T-cell (primary cell): ENCODE measurements at regions of chr7 and their contacts with region 1.

Region 1: DNA sequence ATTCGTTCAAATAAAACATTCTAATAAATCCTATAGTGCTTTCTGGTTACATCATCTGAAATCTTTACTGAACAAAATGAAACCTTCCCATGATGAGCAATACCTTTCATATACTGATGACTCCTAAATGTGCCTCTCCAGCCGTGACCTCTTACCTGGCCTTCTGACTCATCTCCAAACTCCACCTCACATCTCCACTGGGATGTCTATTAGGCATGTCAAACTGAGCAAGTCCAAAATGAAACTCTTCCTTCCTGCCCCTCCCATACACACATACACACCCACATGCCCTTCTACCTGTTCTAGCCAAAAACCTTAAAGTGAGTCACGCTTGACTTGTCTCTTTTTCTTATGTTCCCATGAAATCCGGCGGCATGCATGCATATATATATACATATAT is 22.9 kb downstream of the GSAP start:
- DNase-seq: no peak
- ATAC-seq: peak in 2 of 4 experiments; percentile 29 to 36
- H3K4me3 ChIP-seq: no peak overlapping the region
- H3K4me3 Mint-ChIP-seq: no peak overlapping the region
- H3K27ac ChIP-seq: no peak overlapping the region
- H3K27ac Mint-ChIP-seq: peak overlapping the region in 1 of 2 donors; percentile 11
- H3K4me1 ChIP-seq: peaks cover 0 to 5% of the 10 kb centered on the region in 2 experiments
- H3K4me1 Mint-ChIP-seq: peaks cover 12 to 22% (median 20%) of the 10 kb centered on the region in 3 donors
- H3K27me3 ChIP-seq: no peaks in the 10 kb centered on the region
- H3K27me3 Mint-ChIP-seq: no peaks in the 10 kb centered on the region

Region 2: GRCh38 chr7:77382532-77382931 is 10.7 kb before region 1 on chr7:
- CTCF ChIA-PET with region 1: no interaction called
- POLR2A ChIA-PET with region 1: no interaction called
- DNase-seq: no peak
- ATAC-seq: no peak
- H3K4me3 ChIP-seq: no peak overlapping the region
- H3K4me3 Mint-ChIP-seq: no peak overlapping the region
- H3K27ac ChIP-seq: no peak overlapping the region
- H3K27ac Mint-ChIP-seq: no peak overlapping the region
- H3K4me1 ChIP-seq: no peaks in the 10 kb centered on the region
- H3K4me1 Mint-ChIP-seq: no peaks in the 10 kb centered on the region
- H3K27me3 ChIP-seq: no peaks in the 10 kb centered on the region
- H3K27me3 Mint-ChIP-seq: no peaks in the 10 kb centered on the region

Region 3: GRCh38 chr7:77428777-77429231 is 35.5 kb after region 1 on chr7:
- CTCF ChIA-PET with region 1: no interaction called
- POLR2A ChIA-PET with region 1: interaction called in 1 of 2 experiments, 13 read pairs
- DNase-seq: peak in 13 of 35 experiments; percentile 5 to 55 (median 27)
- ATAC-seq: no peak
- H3K4me3 ChIP-seq: no peak overlapping the region
- H3K4me3 Mint-ChIP-seq: peak overlapping the region in 1 of 3 donors; percentile 63
- H3K27ac ChIP-seq: no peak overlapping the region
- H3K27ac Mint-ChIP-seq: peak overlapping the region in 1 of 2 donors; percentile 83
- H3K4me1 ChIP-seq: peaks cover 14 to 16% of the 10 kb centered on the region in 2 experiments
- H3K4me1 Mint-ChIP-seq: peaks cover 24 to 37% (median 26%) of the 10 kb centered on the region in 3 donors
- H3K27me3 ChIP-seq: no peaks in the 10 kb centered on the region
- H3K27me3 Mint-ChIP-seq: peaks cover 0 to 5% of the 10 kb centered on the region in 2 donors